ENCODE measurements at regions of chr2 and their contacts with region 1.

Region 1: GRCh38 chr2:170350929-170351826 is 173.2 kb downstream of the MYO3B start:
- DNase-seq: no peak
- H3K4me3 ChIP-seq: no peak overlapping the region
- H3K27ac ChIP-seq: no peak overlapping the region
- H3K4me1 ChIP-seq: peaks cover 17% of the 10 kb centered on the region
- H3K27me3 ChIP-seq: no peaks in the 10 kb centered on the region
- CTCF ChIP-seq: no peak

Region 2: DNA sequence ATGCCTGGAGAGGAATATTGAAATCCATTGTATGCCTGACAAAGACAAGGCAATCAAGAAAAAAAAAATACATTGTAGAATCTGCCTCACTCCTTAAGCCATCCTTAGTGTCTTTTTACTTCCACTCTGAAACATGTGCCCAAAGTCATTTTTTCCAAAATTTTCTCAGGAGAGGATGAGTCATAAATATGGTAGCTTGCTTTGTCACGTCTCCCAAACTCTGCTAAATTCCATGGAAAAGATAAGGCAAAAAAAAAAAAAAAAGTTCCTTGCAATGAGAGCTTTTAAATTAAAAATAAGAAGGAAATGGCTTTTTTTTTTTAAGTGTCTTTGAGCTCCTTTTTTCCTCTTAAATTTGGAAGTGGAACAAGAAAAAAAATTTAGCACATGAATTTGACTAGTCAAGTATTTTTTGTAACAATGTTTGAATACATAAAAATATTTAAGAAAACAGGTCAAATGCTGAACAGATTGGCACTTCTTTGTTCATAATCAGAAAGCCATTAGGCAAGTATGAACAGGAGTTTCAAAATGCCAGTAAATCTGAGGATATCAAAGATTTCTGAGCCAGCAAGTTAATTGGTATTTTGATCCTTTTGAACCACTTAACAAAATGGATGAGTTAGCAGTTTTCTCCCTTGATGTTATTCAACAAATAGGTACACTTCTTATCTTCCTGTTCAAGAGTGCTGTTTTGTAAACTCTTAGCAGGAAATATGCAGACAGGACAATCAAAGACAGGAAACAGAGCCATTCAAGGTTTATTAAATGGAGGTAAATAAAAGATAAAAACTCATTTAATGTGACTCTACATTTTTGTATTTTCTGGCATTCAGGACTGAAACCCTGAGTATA is 116.6 kb after region 1 on chr2:
- CTCF ChIA-PET with region 1: no interaction called
- POLR2A ChIA-PET with region 1: no interaction called
- intact Hi-C with region 1: no loop called
- DNase-seq: no peak
- H3K4me3 ChIP-seq: no peak overlapping the region
- H3K27ac ChIP-seq: no peak overlapping the region
- H3K4me1 ChIP-seq: no peaks in the 10 kb centered on the region
- H3K27me3 ChIP-seq: no peaks in the 10 kb centered on the region
- CTCF ChIP-seq: no peak

Region 3: GRCh38 chr2:170493426-170494097 is 142.4 kb after region 1 on chr2:
- CTCF ChIA-PET with region 1: interaction called, 11 read pairs
- POLR2A ChIA-PET with region 1: no interaction called
- intact Hi-C with region 1: no loop called
- DNase-seq: peak; percentile 57
- H3K4me3 ChIP-seq: no peak overlapping the region
- H3K27ac ChIP-seq: no peak overlapping the region
- H3K4me1 ChIP-seq: no peaks in the 10 kb centered on the region
- H3K27me3 ChIP-seq: no peaks in the 10 kb centered on the region
- CTCF ChIP-seq: no peak

Region 4: DNA sequence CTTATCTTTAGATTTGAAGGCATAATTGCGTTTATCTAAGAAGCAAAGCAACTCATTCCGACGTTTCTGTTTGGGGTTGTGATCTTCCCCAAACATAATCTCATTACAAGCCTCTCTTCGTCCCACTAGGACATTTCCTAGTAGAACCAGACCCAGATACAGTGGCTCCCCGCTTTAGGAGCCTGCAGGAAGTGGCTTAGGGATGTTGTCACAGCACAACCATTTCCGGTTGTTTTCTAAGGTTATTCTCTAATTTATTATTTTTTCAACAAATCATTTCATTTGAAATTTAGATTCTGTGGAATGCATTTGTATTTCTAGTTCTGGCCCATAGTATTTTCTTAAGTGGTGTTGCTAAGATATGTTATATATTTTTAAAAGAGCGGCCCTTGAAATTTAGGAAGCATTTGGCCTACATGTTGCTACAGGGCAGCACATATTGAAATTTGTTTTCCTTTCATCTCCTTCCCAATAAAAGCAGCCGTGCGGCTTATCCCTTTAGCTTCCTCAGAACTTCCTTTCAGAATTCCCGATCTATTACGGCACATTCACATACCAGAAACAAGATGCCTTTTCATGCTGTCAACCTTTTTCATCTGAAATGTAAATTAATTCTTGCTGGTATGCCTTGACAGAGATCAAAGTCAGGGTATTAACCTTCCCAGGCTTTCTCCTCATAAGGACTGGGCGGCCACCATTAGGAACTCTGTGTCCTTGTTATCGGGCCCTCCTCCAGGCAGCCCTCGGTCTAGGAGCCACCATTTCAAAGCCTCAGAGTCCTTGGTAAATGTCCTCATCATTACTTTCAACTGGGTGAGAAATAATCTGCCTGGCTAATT is 153.0 kb after region 1 on chr2:
- CTCF ChIA-PET with region 1: no interaction called
- POLR2A ChIA-PET with region 1: no interaction called
- intact Hi-C with region 1: no loop called
- DNase-seq: peak; percentile 96
- H3K4me3 ChIP-seq: peak overlapping the region; percentile 16
- H3K27ac ChIP-seq: peak overlapping the region; percentile 64
- H3K4me1 ChIP-seq: peaks cover 45% of the 10 kb centered on the region
- H3K27me3 ChIP-seq: no peaks in the 10 kb centered on the region
- CTCF ChIP-seq: no peak

Measured in A673 (cell line).